ENCODE measurements at regions of chr12 and their contacts with region 1.

Region 1: GRCh38 chr12:123457980-123458783 is at the start of gene SNRNP35:
- DNase-seq: peak; percentile 85
- ATAC-seq: peak; percentile 76
- H3K4me3 Mint-ChIP-seq: peak within 1 kb of the TSS; percentile 95
- H3K27ac Mint-ChIP-seq: peak within 1 kb of the TSS; percentile 99
- H3K4me1 Mint-ChIP-seq: peaks cover 23% of the 10 kb centered on the region
- H3K27me3 Mint-ChIP-seq: no peaks in the 10 kb centered on the region
- CTCF ChIP-seq: no peak
- total RNA-seq, gene SNRNP35: 18.4 to 25.4 TPM

Region 2: GRCh38 chr12:123436017-123436964 is 21.9 kb before region 1 on chr12 and contains the start of gene RILPL2:
- CTCF ChIA-PET with region 1: interaction called, 4 read pairs
- POLR2A ChIA-PET with region 1: interaction called, 17 read pairs
- intact Hi-C with region 1: no loop called
- DNase-seq: peak; percentile 95
- ATAC-seq: peak; percentile 87
- H3K4me3 Mint-ChIP-seq: peak within 1 kb of the TSS; percentile 96
- H3K27ac Mint-ChIP-seq: peak within 1 kb of the TSS; percentile 97
- H3K4me1 Mint-ChIP-seq: peaks cover 32% of the 10 kb centered on the region
- H3K27me3 Mint-ChIP-seq: no peaks in the 10 kb centered on the region
- CTCF ChIP-seq: no peak
- total RNA-seq, gene RILPL2: 9.0 to 9.3 TPM

Region 3: GRCh38 chr12:123474485-123475245 is 16.5 kb after region 1 on chr12:
- CTCF ChIA-PET with region 1: no interaction called
- POLR2A ChIA-PET with region 1: interaction called, 12 read pairs
- intact Hi-C with region 1: no loop called
- DNase-seq: no peak
- ATAC-seq: peak; percentile 56
- H3K4me3 Mint-ChIP-seq: no peak overlapping the region
- H3K27ac Mint-ChIP-seq: peak overlapping the region; percentile 82
- H3K4me1 Mint-ChIP-seq: peaks cover 16% of the 10 kb centered on the region
- H3K27me3 Mint-ChIP-seq: no peaks in the 10 kb centered on the region
- CTCF ChIP-seq: no peak

Region 4: GRCh38 chr12:123488539-123489230 is 30.5 kb after region 1 on chr12:
- CTCF ChIA-PET with region 1: no interaction called
- POLR2A ChIA-PET with region 1: no interaction called
- intact Hi-C with region 1: no loop called
- DNase-seq: no peak
- ATAC-seq: no peak
- H3K4me3 Mint-ChIP-seq: no peak overlapping the region
- H3K27ac Mint-ChIP-seq: no peak overlapping the region
- H3K4me1 Mint-ChIP-seq: peaks cover 14% of the 10 kb centered on the region
- H3K27me3 Mint-ChIP-seq: no peaks in the 10 kb centered on the region
- CTCF ChIP-seq: no peak

Measured in activated CD8-positive, alpha-beta T cell treated with anti-CD3 and anti-CD28 coated beads for 36 hours (primary cell).